Activated T-helper 1 cell treated with anti-CD3 and anti-CD28 coated beads, Interleukin-12 subunit alpha, Interleukin-12 subunit beta, Interleukin-2, Interleukin-4 antibody, amounts not matched to agents 30 ng/mL and 10 ng/mL and 1 ng/mL, durations not matched to agents 14 hours and 24 hours and 36 hours (primary cell): ENCODE measurements at regions of chr1 and their contacts with region 1.

Region 1: GRCh38 chr1:43864111-43865045 is 69.2 kb upstream of the ARTN start:
- DNase-seq: no peak
- H3K4me3 Mint-ChIP-seq: no peak overlapping the region
- H3K27ac Mint-ChIP-seq: peak overlapping the region; percentile 89
- H3K4me1 Mint-ChIP-seq: peaks cover 41% of the 10 kb centered on the region
- H3K27me3 Mint-ChIP-seq: no peaks in the 10 kb centered on the region

Region 2: DNA sequence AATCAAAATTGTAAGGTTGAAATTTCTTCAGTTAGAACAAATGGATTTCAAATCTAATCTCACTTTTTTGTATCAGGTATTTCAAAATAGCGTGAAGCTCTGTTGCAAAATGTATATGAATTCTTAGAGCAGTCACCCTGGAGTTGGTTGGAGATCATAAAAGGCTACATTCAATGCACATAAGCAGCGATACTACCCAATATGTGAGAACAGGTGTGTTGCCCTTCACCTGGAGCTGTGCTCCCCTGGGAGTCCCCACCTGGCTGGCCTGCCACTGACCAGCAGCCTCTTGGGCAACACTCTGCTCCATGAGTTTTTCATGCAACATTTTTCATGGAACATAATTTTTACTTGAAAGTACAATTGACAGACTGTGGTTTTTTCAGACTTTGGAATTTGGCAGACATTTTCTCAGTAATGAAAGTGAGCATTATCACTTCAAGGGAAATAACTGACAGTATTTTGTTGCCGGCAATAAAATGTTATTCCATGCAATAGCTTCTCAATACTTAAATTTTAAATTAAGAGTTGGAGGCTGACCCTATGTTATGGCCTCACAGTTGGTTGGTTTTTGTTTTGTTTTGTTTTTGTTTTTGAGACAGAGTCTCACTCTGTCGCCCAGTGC is 61.9 kb before region 1 on chr1:
- intact Hi-C with region 1: no loop called
- DNase-seq: no peak
- H3K4me3 Mint-ChIP-seq: no peak overlapping the region
- H3K27ac Mint-ChIP-seq: no peak overlapping the region
- H3K4me1 Mint-ChIP-seq: peaks cover 12% of the 10 kb centered on the region
- H3K27me3 Mint-ChIP-seq: no peaks in the 10 kb centered on the region

Region 3: DNA sequence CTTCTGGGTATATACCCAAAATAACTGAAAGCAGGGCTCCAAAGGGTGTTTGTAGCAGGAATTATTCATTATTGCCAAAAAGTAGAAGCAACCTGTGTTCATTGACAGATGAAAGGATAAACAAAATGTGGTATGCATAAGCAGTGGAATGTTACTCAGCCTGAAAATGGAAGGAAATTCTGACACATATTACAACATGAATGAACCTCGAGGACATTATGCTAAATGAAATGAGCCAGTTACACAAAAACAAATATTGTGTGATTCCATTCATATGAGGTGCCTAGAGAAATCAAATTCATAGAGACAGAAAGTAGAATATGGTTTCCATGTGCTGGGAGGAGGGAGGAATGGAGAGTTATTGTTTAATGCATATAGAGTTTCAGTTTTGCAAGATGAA is 17.1 kb before region 1 on chr1:
- intact Hi-C with region 1: loop called (anchors 1 kb)
- DNase-seq: no peak
- H3K4me3 Mint-ChIP-seq: no peak overlapping the region
- H3K27ac Mint-ChIP-seq: peak overlapping the region; percentile 61
- H3K4me1 Mint-ChIP-seq: peaks cover 8% of the 10 kb centered on the region
- H3K27me3 Mint-ChIP-seq: no peaks in the 10 kb centered on the region